Pancreas (tissue), 10 donors: ENCODE measurements at regions of chr6 and their contacts with region 1.

Region 1: DNA sequence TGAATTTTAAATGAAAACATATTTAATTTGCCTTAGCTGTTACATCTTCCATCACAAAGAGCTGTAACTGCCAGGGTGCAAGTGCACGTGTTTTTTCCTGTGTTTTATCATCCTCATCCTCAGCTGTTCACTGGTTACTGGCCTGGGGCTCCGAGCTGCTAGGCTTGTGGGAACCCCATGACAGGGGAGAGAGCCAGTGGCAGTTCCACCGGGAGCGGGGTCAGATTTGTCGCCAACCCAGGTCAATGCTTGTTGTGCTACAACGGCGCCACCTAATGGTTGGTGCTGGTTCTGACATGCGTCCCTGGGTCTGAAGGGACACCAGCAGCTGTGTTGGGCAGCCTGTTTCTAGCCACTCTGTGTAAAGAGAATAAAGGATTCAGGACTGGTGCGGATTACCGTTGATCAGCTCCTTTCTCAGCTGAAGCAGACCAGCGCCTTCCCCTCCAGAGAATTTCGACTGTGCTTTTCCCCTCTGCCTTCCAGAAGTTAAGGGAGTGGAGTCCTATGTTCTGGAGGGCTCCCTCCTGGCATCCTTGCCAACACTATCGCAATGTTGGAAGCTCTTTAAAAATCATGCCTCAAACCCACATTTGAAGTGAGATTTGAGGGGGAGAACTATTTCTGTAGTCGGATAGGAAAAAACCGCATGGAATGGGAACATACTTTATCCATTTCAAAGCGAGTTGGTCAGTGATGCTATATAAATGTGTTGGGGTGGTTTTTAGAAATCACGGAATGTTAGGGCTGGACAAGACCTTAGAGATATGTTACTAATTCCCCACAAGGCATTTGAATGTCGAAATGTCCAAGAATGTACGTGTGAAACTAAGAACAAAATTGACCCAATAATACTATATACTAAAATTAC is 32.1 kb downstream of the SUMO4 start:
- DNase-seq: peak; percentile 78 to 96 (median 92)
- ATAC-seq: peak; percentile 97 to 100 (median 98)
- H3K4me3 ChIP-seq: no peak overlapping the region
- H3K27ac ChIP-seq: no peak overlapping the region
- H3K4me1 ChIP-seq: peaks cover 0 to 3% (median 3%) of the 10 kb centered on the region in 3 donors
- H3K27me3 ChIP-seq: no peaks in the 10 kb centered on the region
- CTCF ChIP-seq: peak; percentile 83 to 99 (median 88)

Region 2: GRCh38 chr6:149028767-149029405 is 403.3 kb before region 1 on chr6:
- intact Hi-C with region 1: loop called in 2 of 3 experiments (anchors 5 to 10 kb)
- DNase-seq: peak in 4 of 6 donors; percentile 46 to 77 (median 69)
- ATAC-seq: peak; percentile 64 to 87 (median 82)
- H3K4me3 ChIP-seq: no peak overlapping the region
- H3K27ac ChIP-seq: no peak overlapping the region
- H3K4me1 ChIP-seq: peaks cover 0 to 15% (median 4%) of the 10 kb centered on the region in 3 donors
- H3K27me3 ChIP-seq: no peaks in the 10 kb centered on the region
- CTCF ChIP-seq: peak; percentile 29 to 57 (median 51)

Region 3: GRCh38 chr6:149082286-149082707 is 349.8 kb before region 1 on chr6:
- intact Hi-C with region 1: loop called in 2 of 3 experiments (anchors 5 to 10 kb)
- DNase-seq: peak in 5 of 6 donors; percentile 68 to 82 (median 73)
- ATAC-seq: peak; percentile 63 to 88 (median 80)
- H3K4me3 ChIP-seq: no peak overlapping the region
- H3K27ac ChIP-seq: no peak overlapping the region
- H3K4me1 ChIP-seq: peaks cover 14 to 33% (median 17%) of the 10 kb centered on the region in 3 donors
- H3K27me3 ChIP-seq: no peaks in the 10 kb centered on the region
- CTCF ChIP-seq: peak; percentile 46 to 75 (median 60)

Region 4: GRCh38 chr6:149508485-149508884 is 76.3 kb after region 1 on chr6:
- intact Hi-C with region 1: no loop called
- DNase-seq: no peak
- ATAC-seq: no peak
- H3K4me3 ChIP-seq: no peak overlapping the region
- H3K27ac ChIP-seq: no peak overlapping the region
- H3K4me1 ChIP-seq: no peaks in the 10 kb centered on the region
- H3K27me3 ChIP-seq: no peaks in the 10 kb centered on the region
- CTCF ChIP-seq: no peak